ENCODE measurements at regions of chr1 and their contacts with region 1.

Region 1: DNA sequence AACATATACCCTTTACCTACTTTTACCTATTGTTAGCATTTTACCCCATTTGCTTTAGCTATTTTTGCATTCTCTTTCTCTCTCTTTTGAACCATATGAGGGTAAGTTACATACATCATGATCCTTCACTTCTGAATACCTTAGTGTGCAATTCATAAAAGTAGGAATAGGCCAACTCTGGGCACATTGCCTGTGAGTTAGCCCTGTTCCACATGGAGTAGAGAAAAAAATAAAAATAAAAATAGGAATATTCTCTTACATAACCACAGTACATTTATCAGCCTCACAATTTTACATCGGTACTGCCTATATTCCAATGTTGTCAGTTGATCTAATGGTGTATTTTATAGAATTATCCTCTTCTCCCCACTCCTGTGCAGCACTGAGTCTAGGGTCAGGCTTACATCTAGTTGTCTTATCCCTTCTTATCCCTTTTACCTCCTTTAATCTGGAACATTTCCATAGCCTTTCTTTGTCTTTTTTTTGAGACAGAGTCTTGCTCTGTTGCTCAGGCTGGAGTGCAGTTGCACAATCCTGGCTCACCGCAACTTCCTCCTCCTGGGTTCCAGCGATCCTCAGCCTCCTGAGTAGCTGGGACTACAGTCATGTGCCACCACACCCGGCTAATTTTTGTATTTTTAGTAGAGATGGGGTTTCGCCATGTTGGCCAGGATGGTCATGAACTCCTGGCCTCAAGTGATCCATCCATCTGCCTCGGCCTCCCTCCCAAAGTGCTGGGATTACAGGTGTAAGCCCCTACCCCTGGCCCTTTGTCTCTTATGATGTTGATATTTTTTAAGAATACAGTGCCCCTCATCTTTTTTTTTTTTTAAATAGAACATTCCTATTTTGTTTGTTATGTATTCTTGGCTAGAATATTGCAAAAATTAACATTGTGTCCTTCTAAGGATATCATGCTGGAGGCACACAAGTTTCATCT is 11.1 kb upstream of the SLC30A1 start:
- H3K4me3 Mint-ChIP-seq: peak overlapping the region; percentile 50
- H3K27ac Mint-ChIP-seq: peak overlapping the region; percentile 79
- H3K4me1 Mint-ChIP-seq: peaks cover 64% of the 10 kb centered on the region
- H3K27me3 Mint-ChIP-seq: no peaks in the 10 kb centered on the region

Region 2: GRCh38 chr1:211541720-211542453 is 48.2 kb before region 1 on chr1:
- intact Hi-C with region 1: no loop called
- H3K4me3 Mint-ChIP-seq: no peak overlapping the region
- H3K27ac Mint-ChIP-seq: no peak overlapping the region
- H3K4me1 Mint-ChIP-seq: no peaks in the 10 kb centered on the region
- H3K27me3 Mint-ChIP-seq: peaks cover 2% of the 10 kb centered on the region

Region 3: GRCh38 chr1:211606914-211607755 is 17.1 kb after region 1 on chr1:
- intact Hi-C with region 1: loop called (anchors 2 kb)
- H3K4me3 Mint-ChIP-seq: peak overlapping the region; percentile 84
- H3K27ac Mint-ChIP-seq: peak overlapping the region; percentile 97
- H3K4me1 Mint-ChIP-seq: peaks cover 75% of the 10 kb centered on the region
- H3K27me3 Mint-ChIP-seq: no peaks in the 10 kb centered on the region

Region 4: GRCh38 chr1:211735208-211736170 is 145.4 kb after region 1 on chr1:
- intact Hi-C with region 1: no loop called
- H3K4me3 Mint-ChIP-seq: no peak overlapping the region
- H3K27ac Mint-ChIP-seq: no peak overlapping the region
- H3K4me1 Mint-ChIP-seq: peaks cover 39% of the 10 kb centered on the region
- H3K27me3 Mint-ChIP-seq: peaks cover 2% of the 10 kb centered on the region

Measured in dendritic cell treated with granulocyte-macrophage colony-stimulating factor and Interleukin-4, amounts not matched to agents 40 ng/mL and 50 ng/mL, for 4 days (primary cell).